Posterior vena cava (tissue), 2 donors: ENCODE measurements at regions of chr15 and their contacts with region 1.

Region 1: GRCh38 chr15:79615754-79616153 is 183.6 kb downstream of the MINAR1 start:
- DNase-seq: no peak

Region 2: GRCh38 chr15:79640206-79640605 is 24.5 kb after region 1 on chr15:
- intact Hi-C with region 1: no loop called
- DNase-seq: no peak

Region 3: GRCh38 chr15:80475572-80475971 is 859.8 kb after region 1 on chr15:
- intact Hi-C with region 1: loop called in 1 of 2 experiments (anchors 10 kb)
- DNase-seq: no peak